Endothelial cell of umbilical vein (primary cell): ENCODE measurements at regions of chr16 and their contacts with region 1.

Region 1: DNA sequence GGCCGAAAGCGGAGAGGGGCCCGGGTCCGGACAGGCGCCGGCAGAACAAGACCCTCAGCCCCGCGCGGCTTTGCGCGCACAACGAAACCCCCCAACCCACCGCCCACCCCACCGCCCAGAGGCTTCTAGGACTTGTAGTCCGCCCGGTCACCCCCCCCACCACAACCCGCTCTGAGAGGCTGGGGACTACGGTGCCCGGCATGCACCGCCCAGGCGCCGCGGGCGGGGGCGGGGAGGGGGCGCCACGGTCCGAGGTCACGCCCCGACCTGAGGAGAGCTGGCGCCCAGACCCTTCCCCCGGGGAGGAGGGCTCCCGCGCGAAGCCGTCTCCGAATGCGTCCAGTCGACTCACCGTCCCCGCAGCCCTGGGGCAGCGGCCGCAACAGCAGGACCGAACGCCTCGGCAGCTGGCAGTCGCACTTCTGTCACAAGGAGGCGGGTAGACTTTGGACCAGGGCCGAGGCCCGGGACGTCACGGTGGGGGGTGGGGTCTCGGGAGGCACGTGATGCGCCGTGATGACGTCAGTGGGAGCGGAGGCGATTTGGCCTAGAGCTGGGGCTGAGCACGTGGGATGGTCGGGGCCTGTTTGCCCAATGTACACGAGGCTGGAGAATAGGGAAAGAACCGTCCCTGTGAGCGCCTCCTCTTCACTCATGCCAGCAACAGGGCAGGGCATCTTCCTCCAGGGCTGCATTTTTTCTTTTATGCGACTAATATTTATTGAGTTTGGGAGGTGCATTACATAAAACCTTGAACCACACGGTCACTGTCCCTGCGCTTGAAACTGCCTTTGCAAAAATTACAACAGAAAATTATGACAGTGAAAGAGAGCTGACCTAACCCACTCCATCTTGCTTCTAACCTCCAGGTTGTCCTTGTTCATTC is at the start of gene CDIP1:
- DNase-seq: peak; percentile 97
- H3K4me3 ChIP-seq: peak within 1 kb of the TSS; percentile 50 to 60 (median 57)
- H3K27ac ChIP-seq: peak within 1 kb of the TSS; percentile 25
- H3K4me1 ChIP-seq: peaks cover 4% of the 10 kb centered on the region
- H3K27me3 ChIP-seq: peaks cover 0 to 2% of the 10 kb centered on the region in 2 experiments
- CTCF ChIP-seq: peak in 1 of 2 donors; percentile 3
- POLR2A ChIP-seq: peak; percentile 72
- total RNA-seq, gene CDIP1: 22.4 and 33.9 TPM in 2 replicates

Region 2: DNA sequence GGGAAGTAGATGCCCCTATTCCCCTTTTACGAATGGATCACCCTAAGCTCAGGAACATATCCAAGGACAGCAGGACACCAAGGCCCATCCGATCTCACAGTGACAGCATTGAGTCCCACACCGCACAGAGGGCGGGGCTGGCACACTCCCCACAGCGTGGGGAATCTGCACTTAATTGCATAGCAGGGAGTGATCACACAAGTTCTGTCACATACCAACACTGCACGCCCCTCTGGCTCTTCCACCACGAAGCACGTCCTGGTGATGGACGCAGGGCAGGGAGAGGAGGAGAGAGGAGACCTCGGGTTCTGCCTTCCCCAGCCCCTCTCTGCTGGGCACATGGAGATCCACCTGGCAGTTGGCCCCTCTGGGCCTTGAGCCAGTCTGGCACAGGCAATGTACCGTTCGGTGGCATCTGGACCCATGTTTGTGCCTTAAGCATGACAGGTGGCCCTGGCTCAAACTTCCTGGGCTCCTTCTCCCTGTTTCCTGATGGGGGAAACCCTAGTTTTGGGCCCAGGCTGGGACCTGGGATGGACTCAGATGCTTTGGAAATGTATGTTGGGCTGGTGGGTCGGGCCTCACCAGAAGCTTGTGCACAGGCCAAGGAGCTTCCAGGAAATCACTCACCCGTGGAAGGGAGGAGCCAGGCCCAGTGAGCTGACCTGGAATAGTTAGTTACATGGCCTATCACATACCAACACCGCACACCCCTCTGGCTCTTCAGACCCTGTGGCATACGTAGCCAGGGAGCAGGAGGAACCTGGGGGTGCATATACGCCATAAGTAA is 623.0 kb before region 1 on chr16:
- CTCF ChIA-PET with region 1: no interaction called
- POLR2A ChIA-PET with region 1: no interaction called
- dilution Hi-C with region 1: no loop called
- intact Hi-C with region 1: no loop called
- DNase-seq: no peak
- H3K4me3 ChIP-seq: no peak overlapping the region
- H3K27ac ChIP-seq: no peak overlapping the region
- H3K4me1 ChIP-seq: no peaks in the 10 kb centered on the region
- H3K27me3 ChIP-seq: no peaks in the 10 kb centered on the region
- CTCF ChIP-seq: no peak
- POLR2A ChIP-seq: no peak

Region 3: DNA sequence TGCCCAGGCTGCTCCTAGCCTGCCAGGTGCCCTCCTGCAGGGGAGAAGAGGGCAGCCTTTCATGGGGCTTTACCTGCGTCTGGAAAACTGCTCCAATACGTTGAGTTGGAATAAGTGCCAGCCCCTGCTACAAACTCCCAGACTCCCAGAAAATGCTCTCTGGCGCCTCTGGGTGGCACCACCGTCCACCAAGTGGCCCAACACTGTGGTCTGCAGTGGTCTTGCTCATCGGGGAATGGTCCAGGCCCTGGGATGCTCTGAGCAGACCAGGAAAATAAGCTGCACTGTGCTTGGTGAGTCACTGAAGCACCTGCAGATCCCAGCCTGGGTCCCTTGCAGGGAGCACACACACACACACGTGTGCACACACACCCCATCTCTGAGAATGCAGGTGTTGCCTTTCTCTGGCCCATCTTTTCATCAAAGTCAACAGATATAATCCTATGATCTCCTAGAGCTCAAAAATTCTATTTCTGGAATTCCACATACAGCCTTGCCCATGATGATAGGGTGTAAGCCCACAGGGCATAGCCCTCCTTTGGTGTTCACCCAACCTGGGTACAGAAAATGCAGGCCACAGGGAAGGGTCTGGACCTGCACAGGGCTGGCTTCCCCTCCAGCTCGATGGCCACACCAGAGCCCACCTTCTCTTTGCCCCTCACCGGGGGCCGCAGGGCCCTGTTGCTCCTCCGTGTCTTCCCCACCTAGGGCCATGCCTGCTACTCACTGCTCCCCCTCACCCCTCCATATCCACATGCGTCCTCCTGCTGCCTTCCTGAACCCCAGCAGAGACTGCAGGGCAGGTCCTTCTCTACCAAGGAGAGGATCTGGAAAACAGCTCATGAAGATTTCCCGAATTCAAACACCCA is 20.5 kb before region 1 on chr16:
- CTCF ChIA-PET with region 1: interaction called, 4 read pairs
- POLR2A ChIA-PET with region 1: no interaction called
- dilution Hi-C with region 1: no loop called
- intact Hi-C with region 1: loop called (anchors 2 kb)
- DNase-seq: peak; percentile 66
- H3K4me3 ChIP-seq: no peak overlapping the region
- H3K27ac ChIP-seq: no peak overlapping the region
- H3K4me1 ChIP-seq: peaks cover 22% of the 10 kb centered on the region
- H3K27me3 ChIP-seq: no peaks in the 10 kb centered on the region
- CTCF ChIP-seq: peak; percentile 64 to 76
- POLR2A ChIP-seq: no peak

Region 4: GRCh38 chr16:4601036-4601863 is 62.7 kb after region 1 on chr16:
- CTCF ChIA-PET with region 1: no interaction called
- POLR2A ChIA-PET with region 1: no interaction called
- dilution Hi-C with region 1: no loop called
- intact Hi-C with region 1: no loop called
- DNase-seq: no peak
- H3K4me3 ChIP-seq: no peak overlapping the region
- H3K27ac ChIP-seq: no peak overlapping the region
- H3K4me1 ChIP-seq: no peaks in the 10 kb centered on the region
- H3K27me3 ChIP-seq: peaks cover 2 to 3% of the 10 kb centered on the region in 2 experiments
- CTCF ChIP-seq: no peak
- POLR2A ChIP-seq: no peak

Region 5: GRCh38 chr16:4616047-4616811 is 77.6 kb after region 1 on chr16:
- CTCF ChIA-PET with region 1: interaction called, 3 read pairs
- POLR2A ChIA-PET with region 1: no interaction called
- dilution Hi-C with region 1: no loop called
- intact Hi-C with region 1: loop called (anchors 5 kb)
- DNase-seq: peak; percentile 99
- H3K4me3 ChIP-seq: peak overlapping the region in 2 of 3 experiments; percentile 17 to 19
- H3K27ac ChIP-seq: peak overlapping the region; percentile 79
- H3K4me1 ChIP-seq: peaks cover 21% of the 10 kb centered on the region
- H3K27me3 ChIP-seq: no peaks in the 10 kb centered on the region
- CTCF ChIP-seq: peak; percentile 16 to 58
- POLR2A ChIP-seq: peak; percentile 71